SK-N-SH (cell line): ENCODE measurements at regions of chr15 and their contacts with region 1.

Region 1: GRCh38 chr15:63048115-63048775 is 5.7 kb downstream of the TPM1 start:
- DNase-seq: peak; percentile 97
- H3K4me3 ChIP-seq: peak overlapping the region; percentile 64 to 83
- H3K27ac ChIP-seq: peak overlapping the region; percentile 91 to 93
- H3K4me1 ChIP-seq: peaks cover 36 to 53% of the 10 kb centered on the region in 2 experiments
- H3K27me3 ChIP-seq: no peaks in the 10 kb centered on the region
- CTCF ChIP-seq: peak; percentile 93
- EP300 ChIP-seq: no peak; a peak in 1 of 4 replicates
- RAD21 ChIP-seq: peak; percentile 80

Region 2: GRCh38 chr15:62782039-62782791 is 266.0 kb before region 1 on chr15:
- CTCF ChIA-PET with region 1: interaction called, 33 read pairs
- POLR2A ChIA-PET with region 1: interaction called, 3 read pairs
- DNase-seq: peak; percentile 83
- H3K4me3 ChIP-seq: no peak overlapping the region
- H3K27ac ChIP-seq: peak overlapping the region; percentile 76 to 96
- H3K4me1 ChIP-seq: peaks cover 22 to 51% of the 10 kb centered on the region in 2 experiments
- H3K27me3 ChIP-seq: no peaks in the 10 kb centered on the region
- CTCF ChIP-seq: peak; percentile 83
- EP300 ChIP-seq: no peak
- RAD21 ChIP-seq: peak; percentile 99

Region 3: DNA sequence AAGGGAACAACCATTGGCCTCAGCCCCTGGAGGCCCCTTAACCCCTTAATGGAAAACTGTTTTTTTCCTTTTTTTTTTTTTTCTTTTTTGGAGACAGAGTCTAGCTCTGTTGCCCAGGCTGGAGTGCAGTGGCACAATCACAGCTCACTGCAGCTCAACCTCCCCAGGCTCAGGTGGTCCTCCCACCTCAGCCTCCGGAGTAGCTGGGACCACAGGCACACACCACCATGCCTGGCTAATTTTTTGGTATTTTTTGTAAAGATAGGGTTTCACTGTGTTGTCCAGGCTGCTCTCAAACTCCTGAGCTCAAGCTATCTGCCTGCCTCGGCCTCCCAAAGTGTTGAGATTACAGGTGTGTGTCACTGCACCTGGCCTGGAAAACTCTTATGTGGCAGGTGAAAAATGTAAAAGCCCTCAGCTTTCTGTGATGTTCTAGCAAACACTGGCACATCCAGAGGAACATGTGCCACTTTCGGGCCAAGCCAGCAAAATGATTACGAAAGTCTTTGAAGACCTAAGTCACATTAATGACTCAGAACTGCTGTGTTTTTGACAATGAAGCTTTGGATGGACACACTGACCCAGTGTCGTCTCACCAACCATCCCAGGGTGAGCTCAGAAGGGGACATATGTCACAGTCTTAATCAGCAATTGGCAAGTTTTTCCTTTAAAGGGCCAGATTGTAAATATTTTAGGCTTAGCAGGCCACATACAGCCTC is 195.0 kb before region 1 on chr15:
- CTCF ChIA-PET with region 1: interaction called, 15 read pairs
- POLR2A ChIA-PET with region 1: no interaction called
- DNase-seq: no peak
- H3K4me3 ChIP-seq: no peak overlapping the region
- H3K27ac ChIP-seq: no peak overlapping the region
- H3K4me1 ChIP-seq: peaks cover 14% of the 10 kb centered on the region in 2 experiments
- H3K27me3 ChIP-seq: no peaks in the 10 kb centered on the region
- CTCF ChIP-seq: no peak
- EP300 ChIP-seq: no peak
- RAD21 ChIP-seq: no peak

Region 4: DNA sequence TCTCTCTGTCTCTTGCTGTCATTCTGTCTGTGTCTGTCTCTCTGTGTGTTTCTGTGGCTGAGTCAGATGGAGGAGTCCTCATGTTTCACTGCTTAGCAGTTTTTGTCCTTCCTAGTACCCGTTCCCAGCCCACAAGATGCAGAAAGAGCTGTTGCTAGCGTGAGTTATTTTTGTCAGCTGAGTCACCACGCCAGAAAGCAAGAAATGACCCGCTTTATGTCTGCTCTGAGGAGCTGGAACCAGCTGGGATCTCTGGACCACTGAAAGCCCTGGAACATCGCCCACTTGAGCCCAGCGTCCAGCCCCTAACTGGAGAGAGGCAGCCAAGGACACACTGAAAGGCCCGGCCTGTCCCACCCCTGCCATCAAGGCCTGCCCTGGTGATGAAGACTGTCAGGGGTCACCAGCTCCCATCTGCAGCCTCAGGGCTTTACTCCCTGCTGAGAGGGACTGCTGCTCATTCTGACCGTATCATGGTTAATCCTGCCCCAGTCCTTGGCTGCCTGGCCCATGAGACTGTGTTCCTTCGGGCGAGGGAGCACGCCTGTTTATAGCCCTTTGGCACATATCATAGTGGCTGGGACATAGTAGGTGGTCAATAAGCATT is 107.4 kb before region 1 on chr15:
- CTCF ChIA-PET with region 1: interaction called, 13 read pairs
- POLR2A ChIA-PET with region 1: no interaction called
- DNase-seq: peak; percentile 44
- H3K4me3 ChIP-seq: no peak overlapping the region
- H3K27ac ChIP-seq: peak overlapping the region; percentile 82 to 98
- H3K4me1 ChIP-seq: peaks cover 17 to 28% of the 10 kb centered on the region in 2 experiments
- H3K27me3 ChIP-seq: no peaks in the 10 kb centered on the region
- CTCF ChIP-seq: no peak
- EP300 ChIP-seq: peak; percentile 25 to 90; a peak in 3 of 4 replicates
- RAD21 ChIP-seq: no peak

Region 5: DNA sequence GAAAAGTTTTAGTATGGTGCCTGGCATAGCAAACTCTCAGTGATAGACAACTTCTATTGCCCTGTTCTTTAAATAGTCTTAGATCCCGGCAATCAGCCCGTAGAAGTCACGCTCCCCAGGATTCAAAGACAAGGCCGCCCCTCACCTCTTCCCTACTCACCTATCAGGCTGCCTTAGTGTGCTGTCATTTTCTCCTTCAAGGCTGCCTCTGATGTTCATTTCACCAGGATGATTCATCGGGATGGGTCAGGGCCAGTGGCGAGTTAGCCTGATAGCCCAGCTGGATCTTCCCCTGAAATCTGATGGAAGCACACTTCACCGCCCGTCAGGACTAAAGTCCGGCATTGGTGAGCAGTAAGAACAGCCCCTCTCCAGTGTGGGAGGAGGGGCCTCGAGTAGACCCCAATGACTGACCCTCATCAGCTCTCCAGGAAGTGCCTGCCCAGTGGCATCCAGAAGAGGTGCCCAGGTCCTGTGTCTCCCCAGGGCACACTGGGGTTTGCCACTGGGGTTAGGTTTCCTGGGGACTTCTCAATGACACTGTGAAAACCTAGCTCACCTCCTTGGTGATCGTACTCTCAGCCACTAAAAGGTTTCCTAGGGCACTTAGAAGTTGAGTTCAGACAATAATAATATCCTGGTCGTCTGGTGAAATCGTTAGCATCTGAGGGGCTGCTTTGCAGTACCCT is 31.8 kb after region 1 on chr15:
- CTCF ChIA-PET with region 1: interaction called, 315 read pairs
- POLR2A ChIA-PET with region 1: no interaction called
- DNase-seq: no peak
- H3K4me3 ChIP-seq: no peak overlapping the region
- H3K27ac ChIP-seq: peak overlapping the region; percentile 17 to 24; a peak in 3 of 4 replicates
- H3K4me1 ChIP-seq: peaks cover 13 to 23% of the 10 kb centered on the region in 2 experiments; a peak in 3 of 4 replicates
- H3K27me3 ChIP-seq: no peaks in the 10 kb centered on the region
- CTCF ChIP-seq: no peak
- EP300 ChIP-seq: no peak
- RAD21 ChIP-seq: no peak

Region 6: GRCh38 chr15:63504247-63504978 is 456.2 kb after region 1 on chr15 and contains the start of gene USP3:
- CTCF ChIA-PET with region 1: no interaction called
- POLR2A ChIA-PET with region 1: no interaction called
- DNase-seq: peak; percentile 98
- H3K4me3 ChIP-seq: peak within 1 kb of the TSS; percentile 90 to 91
- H3K27ac ChIP-seq: peak within 1 kb of the TSS; percentile 84 to 93
- H3K4me1 ChIP-seq: peaks cover 22 to 30% of the 10 kb centered on the region in 2 experiments; a peak in 3 of 4 replicates
- H3K27me3 ChIP-seq: no peaks in the 10 kb centered on the region
- CTCF ChIP-seq: no peak
- EP300 ChIP-seq: no peak
- RAD21 ChIP-seq: peak; percentile 29; the same call in 1 of the 2 replicates
- polyA plus RNA-seq, gene USP3: 9.3 and 10.8 TPM in 2 replicates